ENCODE measurements at regions of chrX and their contacts with region 1.

Region 1: GRCh38 chrX:81201671-81202455 is at the starts of genes HMGN5 and SH3BGRL:
- DNase-seq: peak; percentile 69
- ATAC-seq: peak; percentile 99
- H3K4me3 Mint-ChIP-seq: peak within 1 kb of the TSS; percentile 98
- H3K27ac Mint-ChIP-seq: peak within 1 kb of the TSS; percentile 96
- H3K4me1 Mint-ChIP-seq: peaks cover 22% of the 10 kb centered on the region
- H3K27me3 Mint-ChIP-seq: no peaks in the 10 kb centered on the region
- CTCF ChIP-seq: no peak
- total RNA-seq, gene HMGN5: 21.7 to 23.4 TPM (median 22.5 TPM) in 3 replicates
- total RNA-seq, gene SH3BGRL: 36.6 to 37.8 TPM (median 37.3 TPM) in 3 replicates

Region 2: GRCh38 chrX:81280148-81280547 is 78.3 kb after region 1 on chrX:
- CTCF ChIA-PET with region 1: interaction called, 11 read pairs
- POLR2A ChIA-PET with region 1: no interaction called
- DNase-seq: peak; percentile 35
- ATAC-seq: peak; percentile 81
- H3K4me3 Mint-ChIP-seq: no peak overlapping the region
- H3K27ac Mint-ChIP-seq: no peak overlapping the region
- H3K4me1 Mint-ChIP-seq: peaks cover 11% of the 10 kb centered on the region
- H3K27me3 Mint-ChIP-seq: no peaks in the 10 kb centered on the region; the same call in 1 of the 2 replicates
- CTCF ChIP-seq: no peak